ENCODE measurements at regions of chr20 and their contacts with region 1.

Region 1: GRCh38 chr20:54284934-54285704 is 77.2 kb downstream of the PFDN4 start:
- DNase-seq: no peak
- ATAC-seq: no peak
- H3K4me3 ChIP-seq: no peak overlapping the region
- H3K27ac ChIP-seq: no peak overlapping the region
- H3K4me1 ChIP-seq: no peaks in the 10 kb centered on the region
- H3K27me3 ChIP-seq: no peaks in the 10 kb centered on the region
- CTCF ChIP-seq: no peak
- POLR2A ChIP-seq: no peak

Region 2: GRCh38 chr20:54132612-54133433 is 152.3 kb before region 1 on chr20:
- intact Hi-C with region 1: no loop called
- DNase-seq: no peak
- ATAC-seq: peak in 3 of 4 donors; percentile 62 to 94 (median 89)
- H3K4me3 ChIP-seq: no peak overlapping the region
- H3K27ac ChIP-seq: peak overlapping the region in 2 of 12 donors; percentile 38 to 51
- H3K4me1 ChIP-seq: peaks cover 0 to 21% (median 0%) of the 10 kb centered on the region in 12 donors
- H3K27me3 ChIP-seq: peaks cover 0 to 19% (median 0%) of the 10 kb centered on the region in 9 donors
- CTCF ChIP-seq: no peak
- POLR2A ChIP-seq: no peak

Region 3: DNA sequence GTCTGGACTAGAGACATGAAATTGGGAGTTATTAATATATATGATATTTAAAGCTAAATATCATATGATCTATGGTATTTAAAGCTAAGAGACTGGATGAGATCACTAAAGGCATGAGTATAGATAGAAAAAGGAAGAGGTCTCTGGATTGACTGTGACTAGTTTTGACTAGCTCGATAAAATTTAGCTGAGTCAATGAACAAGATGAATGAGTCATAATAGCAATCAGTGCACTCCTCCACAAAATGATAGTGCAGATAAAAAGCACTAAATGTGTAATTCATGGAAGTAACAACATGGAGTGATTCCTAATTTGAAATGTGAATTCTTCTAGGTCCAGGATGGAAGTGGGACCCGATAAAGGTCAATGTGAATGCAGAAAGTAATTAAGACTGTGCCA is 50.2 kb after region 1 on chr20:
- intact Hi-C with region 1: loop called in 1 of 10 experiments (anchors 10 kb)
- DNase-seq: no peak
- ATAC-seq: no peak
- H3K4me3 ChIP-seq: no peak overlapping the region
- H3K27ac ChIP-seq: no peak overlapping the region
- H3K4me1 ChIP-seq: no peaks in the 10 kb centered on the region
- H3K27me3 ChIP-seq: no peaks in the 10 kb centered on the region
- CTCF ChIP-seq: no peak
- POLR2A ChIP-seq: no peak